H1 (cell line): ENCODE measurements at regions of chr16 and their contacts with region 1.

Region 1: GRCh38 chr16:88737298-88738150 is 31.2 kb downstream of the CTU2 start:
- DNase-seq: peak; percentile 29 to 88
- H3K4me3 ChIP-seq: no peak overlapping the region
- H3K27ac ChIP-seq: no peak overlapping the region
- H3K4me1 ChIP-seq: peaks cover 0 to 5% (median 0%) of the 10 kb centered on the region in 4 experiments; a peak in 1 of 7 replicates
- H3K27me3 ChIP-seq: no peaks in the 10 kb centered on the region
- CTCF ChIP-seq: peak; percentile 86 to 99 (median 91)
- EP300 ChIP-seq: no peak
- POLR2A ChIP-seq: no peak
- RAD21 ChIP-seq: peak; percentile 40 to 66; a peak in 3 of 4 replicates

Region 2: GRCh38 chr16:88659160-88659559 is 78.4 kb before region 1 on chr16:
- CTCF ChIA-PET with region 1: no interaction called
- POLR2A ChIA-PET with region 1: no interaction called
- DNase-seq: no peak
- H3K4me3 ChIP-seq: no peak overlapping the region
- H3K27ac ChIP-seq: no peak overlapping the region
- H3K4me1 ChIP-seq: peaks cover 0 to 3% (median 0%) of the 10 kb centered on the region in 4 experiments; a peak in 2 of 7 replicates
- H3K27me3 ChIP-seq: no peaks in the 10 kb centered on the region
- CTCF ChIP-seq: no peak
- EP300 ChIP-seq: no peak
- POLR2A ChIP-seq: no peak
- RAD21 ChIP-seq: no peak

Region 3: GRCh38 chr16:88686439-88687253 is 50.9 kb before region 1 on chr16 and contains the start of gene SNAI3:
- CTCF ChIA-PET with region 1: interaction called, 10 read pairs
- POLR2A ChIA-PET with region 1: no interaction called
- DNase-seq: peak; percentile 23 to 98
- H3K4me3 ChIP-seq: peak within 1 kb of the TSS; percentile 61 to 77 (median 69)
- H3K27ac ChIP-seq: no peak within 1 kb of the TSS
- H3K4me1 ChIP-seq: peaks cover 0 to 8% (median 6%) of the 10 kb centered on the region in 4 experiments; a peak in 6 of 7 replicates
- H3K27me3 ChIP-seq: peaks cover 0 to 12% (median 9%) of the 10 kb centered on the region in 4 experiments; a peak in 3 of 7 replicates
- CTCF ChIP-seq: no peak
- EP300 ChIP-seq: no peak
- POLR2A ChIP-seq: peak in 1 of 2 experiments; percentile 19; a peak in 1 of 3 replicates
- RAD21 ChIP-seq: no peak
- total RNA-seq, gene SNAI3: 8.5 and 8.7 TPM in 2 replicates

Region 4: DNA sequence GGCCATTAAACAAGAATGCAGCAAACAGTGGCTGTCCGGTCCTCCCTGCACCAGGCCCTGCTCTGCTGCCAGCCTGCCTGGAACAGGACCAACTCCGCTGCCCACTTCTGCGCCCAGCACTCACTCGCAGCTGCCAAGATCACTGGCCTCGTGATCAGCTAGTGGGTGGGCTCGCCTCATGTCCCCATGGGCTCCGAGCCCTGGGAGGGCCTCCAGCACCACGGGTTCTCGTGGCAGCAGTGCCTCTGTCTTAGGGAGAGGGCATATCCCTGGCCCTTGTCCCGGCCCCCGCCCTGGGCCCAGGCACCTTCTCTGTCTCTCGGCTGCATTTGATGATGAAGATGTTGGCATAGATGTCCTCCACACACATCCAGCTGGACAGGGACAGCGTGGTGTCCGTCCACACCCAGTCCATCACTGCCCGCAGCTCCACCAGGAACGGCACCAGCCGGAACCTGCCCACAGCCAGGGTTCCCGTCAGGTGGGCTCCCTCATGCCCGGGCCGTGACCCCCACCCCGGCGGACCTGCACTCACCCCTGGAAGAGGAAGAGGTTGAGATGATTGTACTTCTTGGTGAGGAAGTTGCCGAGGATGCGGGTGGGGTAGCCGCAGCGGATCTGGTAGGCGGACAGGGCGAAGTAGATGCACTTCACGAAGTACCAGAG is 18.1 kb before region 1 on chr16:
- CTCF ChIA-PET with region 1: interaction called, 24 read pairs
- POLR2A ChIA-PET with region 1: interaction called, 5 read pairs
- DNase-seq: no peak
- H3K4me3 ChIP-seq: no peak overlapping the region
- H3K27ac ChIP-seq: no peak overlapping the region
- H3K4me1 ChIP-seq: no peaks in the 10 kb centered on the region
- H3K27me3 ChIP-seq: no peaks in the 10 kb centered on the region
- CTCF ChIP-seq: no peak
- EP300 ChIP-seq: no peak
- POLR2A ChIP-seq: no peak
- RAD21 ChIP-seq: no peak

Region 5: DNA sequence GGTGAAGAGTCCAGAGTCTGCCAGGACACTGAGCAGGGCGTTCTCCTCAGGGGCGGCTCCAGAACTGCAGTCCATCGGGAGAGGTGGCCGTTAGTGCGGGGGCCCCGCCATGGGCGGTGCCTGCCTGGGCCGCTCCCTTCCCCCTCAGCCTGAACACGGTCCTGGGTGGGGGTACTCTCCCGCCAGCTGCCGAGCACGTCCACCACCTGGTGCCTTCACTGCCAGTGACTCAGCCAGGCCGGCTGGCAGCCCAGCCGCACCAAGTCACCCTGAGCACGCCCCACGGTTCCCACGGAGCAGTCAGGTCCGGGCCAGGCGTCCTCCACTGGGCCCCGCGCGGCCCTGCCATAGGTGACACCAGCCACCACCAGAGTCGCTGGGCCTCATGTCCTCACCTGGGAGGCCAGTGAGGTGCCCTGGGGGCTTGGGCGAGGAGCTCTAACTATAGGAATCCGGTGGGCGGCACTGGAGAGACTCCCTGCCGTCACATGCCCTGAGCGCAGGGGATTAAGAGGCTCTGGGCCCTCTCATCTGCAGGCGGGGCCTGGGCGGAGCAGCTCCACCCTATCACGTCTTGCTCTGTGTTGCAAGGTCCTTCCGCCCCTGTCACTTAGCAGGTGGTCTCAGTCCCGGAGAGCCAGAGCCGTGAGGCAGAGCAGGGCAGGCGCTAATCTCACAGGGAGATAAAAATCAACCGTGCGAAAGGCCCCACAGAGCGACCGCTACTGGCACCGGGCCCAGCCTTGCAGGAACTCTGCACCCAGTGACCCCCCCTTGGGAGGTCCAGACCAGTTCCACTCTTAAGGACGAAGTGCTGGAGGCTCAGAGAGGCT is 33.2 kb after region 1 on chr16:
- CTCF ChIA-PET with region 1: interaction called, 251 read pairs
- POLR2A ChIA-PET with region 1: interaction called, 5 read pairs
- DNase-seq: peak in 1 of 2 experiments; percentile 69
- H3K4me3 ChIP-seq: no peak overlapping the region
- H3K27ac ChIP-seq: no peak overlapping the region
- H3K4me1 ChIP-seq: peaks cover 6 to 41% (median 29%) of the 10 kb centered on the region in 4 experiments
- H3K27me3 ChIP-seq: no peaks in the 10 kb centered on the region
- CTCF ChIP-seq: no peak
- EP300 ChIP-seq: no peak
- POLR2A ChIP-seq: no peak
- RAD21 ChIP-seq: no peak

Region 6: GRCh38 chr16:88793244-88793954 is 55.9 kb after region 1 on chr16:
- CTCF ChIA-PET with region 1: interaction called, 21 read pairs
- POLR2A ChIA-PET with region 1: no interaction called
- DNase-seq: peak in 1 of 2 experiments; percentile 51
- H3K4me3 ChIP-seq: no peak overlapping the region
- H3K27ac ChIP-seq: no peak overlapping the region
- H3K4me1 ChIP-seq: peaks cover 0 to 26% (median 18%) of the 10 kb centered on the region in 4 experiments; a peak in 6 of 7 replicates
- H3K27me3 ChIP-seq: no peaks in the 10 kb centered on the region; a peak in 1 of 7 replicates
- CTCF ChIP-seq: no peak
- EP300 ChIP-seq: no peak
- POLR2A ChIP-seq: no peak
- RAD21 ChIP-seq: no peak